ENCODE measurements at regions of chr16 and their contacts with region 1.

Region 1: DNA sequence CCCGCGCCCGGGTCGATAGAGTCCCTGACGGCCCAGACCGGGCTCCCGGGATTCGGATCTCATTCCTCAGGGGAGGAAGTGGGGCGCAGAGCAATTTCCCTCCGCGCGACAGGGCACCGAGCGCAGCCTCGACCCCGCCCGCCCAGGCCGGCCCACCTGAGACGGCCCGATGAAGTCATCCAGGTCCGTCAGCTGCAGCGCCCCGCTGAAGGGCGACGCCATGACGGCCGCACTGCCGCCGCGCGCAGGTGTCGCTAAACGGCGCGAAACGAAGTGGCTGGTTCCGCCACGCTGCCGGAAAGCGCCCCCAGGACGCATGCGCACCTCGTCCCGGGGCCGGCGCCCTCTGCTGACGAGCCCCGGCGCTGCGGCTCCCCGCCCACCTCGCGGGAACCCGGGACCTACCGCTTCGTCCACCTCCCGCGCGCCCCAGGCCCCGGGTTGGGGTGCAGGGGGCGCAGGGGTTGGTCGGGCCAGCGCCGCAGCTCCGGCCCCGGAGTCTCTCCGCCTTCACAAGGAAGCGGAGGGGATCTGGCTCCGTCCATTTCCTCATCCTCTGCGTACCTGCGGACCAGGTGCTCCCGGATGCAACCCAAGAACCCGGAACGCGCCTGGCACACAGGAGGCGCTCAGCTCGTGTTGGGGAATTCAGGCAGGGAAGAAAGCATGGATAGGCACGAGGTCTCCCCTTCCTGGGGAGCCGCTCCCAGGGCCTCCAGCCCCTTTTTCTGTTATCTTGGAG is at the start of gene CIAO3:
- DNase-seq: peak; percentile 92
- ATAC-seq: peak; percentile 85
- H3K4me3 Mint-ChIP-seq: peak within 1 kb of the TSS; percentile 80
- H3K27ac Mint-ChIP-seq: peak within 1 kb of the TSS; percentile 63
- H3K4me1 Mint-ChIP-seq: peaks cover 20% of the 10 kb centered on the region
- H3K27me3 Mint-ChIP-seq: no peaks in the 10 kb centered on the region
- CTCF ChIP-seq: peak; percentile 88
- total RNA-seq, gene CIAO3: 21.3 to 25.0 TPM

Region 2: GRCh38 chr16:728131-728889 is 12.6 kb before region 1 on chr16:
- CTCF ChIA-PET with region 1: interaction called, 6 read pairs
- POLR2A ChIA-PET with region 1: interaction called, 84 read pairs
- intact Hi-C with region 1: no loop called
- DNase-seq: peak; percentile 72
- ATAC-seq: peak; percentile 58
- H3K4me3 Mint-ChIP-seq: peak overlapping the region; percentile 62
- H3K27ac Mint-ChIP-seq: no peak overlapping the region
- H3K4me1 Mint-ChIP-seq: peaks cover 3% of the 10 kb centered on the region
- H3K27me3 Mint-ChIP-seq: no peaks in the 10 kb centered on the region
- CTCF ChIP-seq: no peak

Region 3: DNA sequence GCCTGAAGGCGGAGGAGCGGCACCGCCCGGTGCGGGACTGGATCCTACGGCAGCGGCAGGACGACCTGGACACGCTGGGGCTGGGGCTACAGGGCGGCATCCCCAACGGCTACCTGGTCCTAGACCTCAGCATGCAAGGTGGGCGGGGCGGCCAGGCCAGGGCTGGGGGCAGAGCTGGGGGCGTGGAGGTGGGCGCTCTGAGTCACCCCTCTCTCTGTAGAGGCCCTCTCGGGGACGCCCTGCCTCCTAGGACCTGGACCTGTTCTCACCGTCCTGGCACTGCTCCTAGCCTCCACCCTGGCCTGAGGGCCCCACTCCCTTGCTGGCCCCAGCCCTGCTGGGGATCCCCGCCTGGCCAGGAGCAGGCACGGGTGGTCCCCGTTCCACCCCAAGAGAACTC is 27.5 kb after region 1 on chr16:
- CTCF ChIA-PET with region 1: no interaction called
- POLR2A ChIA-PET with region 1: no interaction called
- intact Hi-C with region 1: no loop called
- DNase-seq: no peak
- ATAC-seq: no peak
- H3K4me3 Mint-ChIP-seq: no peak overlapping the region
- H3K27ac Mint-ChIP-seq: no peak overlapping the region
- H3K4me1 Mint-ChIP-seq: no peaks in the 10 kb centered on the region
- H3K27me3 Mint-ChIP-seq: no peaks in the 10 kb centered on the region
- CTCF ChIP-seq: no peak

Region 4: GRCh38 chr16:788394-789126 is 47.6 kb after region 1 on chr16 and contains the start of gene CHTF18:
- CTCF ChIA-PET with region 1: interaction called, 20 read pairs
- POLR2A ChIA-PET with region 1: interaction called, 4 read pairs
- intact Hi-C with region 1: no loop called
- DNase-seq: peak; percentile 92
- ATAC-seq: peak; percentile 97
- H3K4me3 Mint-ChIP-seq: peak within 1 kb of the TSS; percentile 87
- H3K27ac Mint-ChIP-seq: peak within 1 kb of the TSS; percentile 78
- H3K4me1 Mint-ChIP-seq: peaks cover 9% of the 10 kb centered on the region
- H3K27me3 Mint-ChIP-seq: no peaks in the 10 kb centered on the region
- CTCF ChIP-seq: no peak
- total RNA-seq, gene CHTF18: 95.6 to 115 TPM

Region 5: GRCh38 chr16:852451-853185 is 111.7 kb after region 1 on chr16:
- CTCF ChIA-PET with region 1: no interaction called
- POLR2A ChIA-PET with region 1: no interaction called
- intact Hi-C with region 1: no loop called
- DNase-seq: no peak
- ATAC-seq: no peak
- H3K4me3 Mint-ChIP-seq: no peak overlapping the region
- H3K27ac Mint-ChIP-seq: no peak overlapping the region
- H3K4me1 Mint-ChIP-seq: no peaks in the 10 kb centered on the region
- H3K27me3 Mint-ChIP-seq: no peaks in the 10 kb centered on the region
- CTCF ChIP-seq: no peak